ENCODE measurements at regions of chr14 and their contacts with region 1.

Region 1: GRCh38 chr14:103847451-103848188 is at the start of gene PPP1R13B:
- DNase-seq: peak; percentile 94
- ATAC-seq: peak; percentile 97
- total RNA-seq, gene PPP1R13B: 101 TPM

Region 2: DNA sequence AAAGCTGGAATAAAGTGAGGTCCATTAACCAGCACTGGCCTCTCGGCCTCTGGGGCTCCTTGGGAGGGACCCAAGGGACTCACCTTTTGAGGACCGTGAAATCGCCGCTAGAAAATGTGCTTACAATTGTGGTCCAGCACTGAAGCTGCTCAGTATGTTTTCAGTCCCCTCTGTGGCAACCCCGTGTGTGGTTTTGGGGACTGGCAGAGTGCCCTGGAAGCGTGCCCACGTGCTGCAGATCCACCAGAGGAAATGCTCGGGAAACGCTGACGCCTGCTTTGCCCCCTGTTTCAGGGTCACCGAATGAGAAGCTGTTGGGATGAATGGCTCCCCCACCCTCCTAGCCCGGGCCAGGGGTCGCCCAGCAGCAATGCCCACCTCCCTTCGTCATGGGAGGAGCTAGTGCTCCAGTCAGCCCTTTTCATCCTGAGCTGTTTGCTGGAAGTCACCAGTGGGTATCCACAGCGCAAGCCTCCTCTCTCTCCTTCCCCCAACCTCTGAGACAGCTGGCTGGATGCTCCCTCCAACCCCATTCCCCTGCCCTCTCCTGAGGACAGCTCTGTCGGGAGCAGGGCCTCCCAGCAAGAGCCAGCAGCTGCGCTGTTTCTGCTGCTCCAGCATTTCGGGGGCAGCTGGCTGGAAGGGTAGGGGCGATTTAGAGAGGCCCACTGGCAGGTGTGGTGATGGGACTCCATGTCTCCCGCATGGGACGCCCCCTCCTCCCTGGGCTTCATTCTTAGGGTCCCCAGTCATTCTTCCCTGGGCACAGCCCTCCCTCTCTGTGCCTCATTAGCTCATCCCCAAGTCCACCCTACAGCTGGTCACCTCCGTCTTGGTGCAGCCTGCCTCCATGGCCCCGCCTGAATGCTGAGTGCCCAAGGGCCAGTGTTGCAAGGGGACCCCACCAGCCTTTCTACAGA is 33.0 kb after region 1 on chr14:
- intact Hi-C with region 1: loop called (anchors 1 kb)
- DNase-seq: peak; percentile 91
- ATAC-seq: peak; percentile 65